ENCODE measurements at regions of chr4 and their contacts with region 1.

Region 1: DNA sequence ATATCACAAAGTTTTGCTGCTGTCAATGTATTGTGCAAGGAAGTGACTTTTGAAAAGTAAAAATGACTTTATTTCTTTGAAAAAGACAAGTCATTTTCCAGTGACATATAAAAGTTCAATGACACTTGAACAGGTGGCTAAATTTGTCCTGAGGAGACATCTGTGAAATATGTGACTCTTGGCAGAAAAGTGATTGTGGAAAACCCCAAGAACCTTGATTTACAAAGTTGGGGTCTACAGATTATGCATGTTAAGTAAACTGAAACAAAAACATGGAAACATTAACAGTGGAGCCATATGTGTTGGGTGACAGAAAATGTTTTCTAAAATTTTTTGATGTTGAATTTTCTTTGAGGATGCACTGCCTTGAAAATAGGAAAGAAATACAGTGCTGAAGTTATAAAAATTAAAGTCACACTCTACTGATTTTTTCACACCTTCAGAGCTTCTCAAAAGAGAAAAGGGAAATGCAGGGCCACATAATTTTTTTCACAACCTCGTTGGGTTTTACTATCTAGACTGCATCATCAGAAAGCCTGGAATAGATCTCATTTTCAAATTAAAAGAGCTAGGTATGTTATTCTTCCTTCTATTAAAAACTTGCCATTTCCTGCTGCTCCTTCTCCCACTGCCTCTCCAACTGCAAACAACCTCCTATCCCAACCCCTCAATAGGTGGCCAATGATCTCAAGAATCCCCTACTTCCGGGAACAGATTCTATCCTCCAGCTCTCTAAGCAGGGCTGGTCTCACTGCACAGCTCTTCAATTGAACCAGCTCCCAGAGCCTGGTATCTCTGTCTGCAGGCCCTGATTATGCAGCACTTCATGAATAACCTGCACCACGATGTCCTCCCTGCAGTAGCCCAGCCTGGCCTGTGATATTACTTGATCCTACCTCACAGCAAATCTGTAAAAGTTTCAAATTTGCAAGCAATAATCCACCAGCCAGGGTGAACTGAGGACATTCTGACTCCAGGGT is 570.8 kb upstream of the CPEB2 start:
- DNase-seq: no peak
- ATAC-seq: peak; percentile 21
- H3K4me3 Mint-ChIP-seq: no peak overlapping the region
- H3K27ac Mint-ChIP-seq: no peak overlapping the region
- H3K4me1 Mint-ChIP-seq: peaks cover 23% of the 10 kb centered on the region
- H3K27me3 Mint-ChIP-seq: peaks cover 2% of the 10 kb centered on the region
- CTCF ChIP-seq: no peak

Region 2: DNA sequence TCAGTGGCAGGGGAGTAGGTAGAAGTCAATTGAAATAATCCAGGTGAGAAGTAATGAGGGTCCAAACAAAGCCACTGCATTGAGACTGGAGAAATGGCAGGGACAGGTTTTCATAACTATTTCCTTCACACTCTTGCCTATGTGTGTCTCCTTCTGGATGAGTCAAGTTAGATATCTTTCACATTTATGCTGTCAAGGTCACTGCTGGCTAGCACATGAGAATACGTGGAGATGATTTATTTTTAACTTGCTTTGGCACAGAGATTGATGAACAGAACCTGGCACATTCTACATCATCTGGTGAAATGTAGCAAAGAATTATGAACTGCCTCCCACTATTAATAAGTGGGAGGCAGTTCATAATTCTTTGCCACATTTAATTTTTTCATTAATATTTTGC is 737.2 kb before region 1 on chr4:
- CTCF ChIA-PET with region 1: no interaction called
- POLR2A ChIA-PET with region 1: no interaction called
- intact Hi-C with region 1: no loop called
- DNase-seq: no peak
- ATAC-seq: no peak
- H3K4me3 Mint-ChIP-seq: no peak overlapping the region
- H3K27ac Mint-ChIP-seq: no peak overlapping the region
- H3K4me1 Mint-ChIP-seq: no peaks in the 10 kb centered on the region
- H3K27me3 Mint-ChIP-seq: peaks cover 7% of the 10 kb centered on the region
- CTCF ChIP-seq: no peak

Region 3: GRCh38 chr4:14143892-14144291 is 287.6 kb before region 1 on chr4:
- CTCF ChIA-PET with region 1: no interaction called
- POLR2A ChIA-PET with region 1: no interaction called
- intact Hi-C with region 1: loop called (anchors 5 kb)
- DNase-seq: no peak
- ATAC-seq: no peak
- H3K4me3 Mint-ChIP-seq: no peak overlapping the region
- H3K27ac Mint-ChIP-seq: no peak overlapping the region
- H3K4me1 Mint-ChIP-seq: no peaks in the 10 kb centered on the region
- H3K27me3 Mint-ChIP-seq: no peaks in the 10 kb centered on the region
- CTCF ChIP-seq: no peak

Region 4: GRCh38 chr4:14400307-14400706 is 31.1 kb before region 1 on chr4:
- CTCF ChIA-PET with region 1: no interaction called
- POLR2A ChIA-PET with region 1: no interaction called
- intact Hi-C with region 1: no loop called
- DNase-seq: no peak
- ATAC-seq: no peak
- H3K4me3 Mint-ChIP-seq: no peak overlapping the region
- H3K27ac Mint-ChIP-seq: no peak overlapping the region
- H3K4me1 Mint-ChIP-seq: no peaks in the 10 kb centered on the region
- H3K27me3 Mint-ChIP-seq: no peaks in the 10 kb centered on the region
- CTCF ChIP-seq: no peak